Activated CD4-positive, alpha-beta memory T cell treated with anti-CD3 and anti-CD28 coated beads, Interleukin-2, amount 10 ng/mL, durations not matched to agents 7 days and 5 days (primary cell): ENCODE measurements at regions of chr16 and their contacts with region 1.

Region 1: DNA sequence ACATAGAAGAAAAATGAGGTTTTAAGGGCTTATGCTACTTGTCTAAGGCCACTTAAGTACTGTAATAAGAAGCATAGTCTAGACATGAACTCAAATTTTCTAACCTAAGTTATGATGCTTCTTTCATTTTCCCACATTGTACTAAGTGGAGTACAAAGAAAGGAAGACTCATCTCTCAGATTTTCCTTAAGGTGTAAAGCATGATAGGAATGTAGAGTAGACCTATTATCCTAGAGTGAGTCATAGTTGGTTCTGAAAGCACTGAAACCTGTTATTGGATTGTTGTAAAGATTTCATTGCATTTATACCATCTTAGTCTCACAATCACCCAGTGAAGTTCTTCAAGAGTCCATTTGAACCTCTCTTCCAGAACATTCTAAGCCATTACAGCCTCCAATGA is 343.8 kb downstream of the TOX3 start:
- DNase-seq: no peak
- H3K4me3 Mint-ChIP-seq: no peak overlapping the region
- H3K27ac Mint-ChIP-seq: no peak overlapping the region
- H3K4me1 Mint-ChIP-seq: no peaks in the 10 kb centered on the region
- H3K27me3 Mint-ChIP-seq: no peaks in the 10 kb centered on the region

Region 2: GRCh38 chr16:52191531-52192134 is 11.5 kb before region 1 on chr16:
- CTCF ChIA-PET with region 1: interaction called, 15 read pairs
- POLR2A ChIA-PET with region 1: no interaction called
- DNase-seq: peak; percentile 51
- H3K4me3 Mint-ChIP-seq: no peak overlapping the region
- H3K27ac Mint-ChIP-seq: no peak overlapping the region
- H3K4me1 Mint-ChIP-seq: no peaks in the 10 kb centered on the region
- H3K27me3 Mint-ChIP-seq: no peaks in the 10 kb centered on the region